ENCODE measurements at regions of chr21 and their contacts with region 1.

Region 1: DNA sequence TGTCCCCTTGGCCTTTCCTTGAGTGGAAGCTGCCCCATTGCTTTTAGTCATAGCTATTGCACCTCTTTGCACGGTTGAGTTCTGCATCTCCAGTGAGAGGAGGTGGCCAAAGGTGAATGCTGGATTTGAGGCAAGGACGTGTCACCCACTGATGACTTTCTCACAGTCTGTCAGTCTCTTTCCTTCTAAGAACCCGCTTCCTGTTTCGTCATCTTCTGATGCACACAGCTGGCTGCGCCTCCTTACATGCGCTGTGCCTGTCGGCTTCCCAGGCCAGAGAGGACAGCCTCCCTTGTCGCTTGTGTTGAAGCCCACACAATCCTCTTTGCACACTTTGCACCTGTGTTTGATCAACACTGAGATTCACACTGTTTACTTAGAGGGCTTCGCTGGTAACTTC is 41.8 kb upstream of the PWP2 start:
- DNase-seq: no peak
- ATAC-seq: no peak
- H3K4me3 ChIP-seq: no peak overlapping the region
- H3K27ac ChIP-seq: no peak overlapping the region
- H3K4me1 ChIP-seq: peaks cover 17% of the 10 kb centered on the region
- H3K27me3 ChIP-seq: no peaks in the 10 kb centered on the region
- CTCF ChIP-seq: no peak
- EP300 ChIP-seq: no peak
- POLR2A ChIP-seq: no peak
- RAD21 ChIP-seq: no peak

Region 2: DNA sequence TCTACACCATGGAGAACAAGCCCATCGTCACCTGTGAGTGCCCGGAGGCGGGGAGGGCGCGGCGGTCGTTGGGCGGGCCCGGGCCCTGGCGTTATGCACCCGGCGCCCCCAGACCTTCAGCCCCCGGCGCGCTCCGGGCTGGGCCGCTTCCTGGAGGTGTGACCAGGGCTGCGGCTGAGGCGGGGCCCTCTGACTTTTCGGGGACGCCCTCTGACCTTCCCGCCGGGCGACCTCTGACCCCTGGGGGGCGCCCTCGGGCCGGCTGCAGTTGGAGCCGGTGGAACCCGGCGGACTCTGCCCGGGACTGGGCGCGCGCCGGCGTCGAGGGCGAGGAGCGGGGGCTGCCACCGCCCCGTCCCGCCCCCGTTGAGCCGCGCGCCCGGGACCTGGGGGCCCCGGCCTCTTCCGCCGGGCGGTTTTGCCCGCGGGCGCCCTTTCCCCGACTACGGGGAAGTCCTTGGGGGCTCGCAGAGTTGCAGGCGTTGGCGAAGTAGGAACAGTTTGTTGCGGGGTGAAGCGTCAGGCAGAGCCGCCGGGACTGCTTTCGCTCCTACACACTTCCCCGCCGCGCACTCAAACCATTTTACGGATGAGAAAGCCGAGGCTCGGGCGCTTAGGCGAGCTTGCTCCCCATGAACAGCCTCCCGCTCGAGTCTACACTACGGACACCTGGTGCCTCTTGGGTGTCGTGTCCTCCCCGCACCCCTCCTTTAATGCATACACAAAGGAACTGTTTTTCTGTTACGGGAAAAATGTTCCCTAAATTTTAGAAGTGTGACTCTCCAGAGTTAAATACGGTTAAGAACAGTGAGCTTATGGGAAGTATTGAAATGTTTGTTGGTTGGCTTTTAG is 52.7 kb before region 1 on chr21:
- CTCF ChIA-PET with region 1: no interaction called
- POLR2A ChIA-PET with region 1: no interaction called
- in situ Hi-C with region 1: no loop called
- intact Hi-C with region 1: loop called (anchors 1 kb)
- DNase-seq: peak; percentile 65
- ATAC-seq: peak; percentile 72
- H3K4me3 ChIP-seq: peak overlapping the region; percentile 80 to 85 (median 83)
- H3K27ac ChIP-seq: peak overlapping the region; percentile 92
- H3K4me1 ChIP-seq: peaks cover 50% of the 10 kb centered on the region
- H3K27me3 ChIP-seq: no peaks in the 10 kb centered on the region; a peak in 1 of 5 replicates
- CTCF ChIP-seq: peak; percentile 78
- EP300 ChIP-seq: no peak
- POLR2A ChIP-seq: no peak
- RAD21 ChIP-seq: peak; percentile 79

Region 3: GRCh38 chr21:44024887-44025362 is 40.5 kb before region 1 on chr21:
- CTCF ChIA-PET with region 1: no interaction called
- POLR2A ChIA-PET with region 1: no interaction called
- in situ Hi-C with region 1: loop called (anchors 5 kb)
- intact Hi-C with region 1: no loop called
- DNase-seq: no peak
- ATAC-seq: peak; percentile 42; the same call in 2 of the 3 replicates
- H3K4me3 ChIP-seq: no peak overlapping the region
- H3K27ac ChIP-seq: no peak overlapping the region
- H3K4me1 ChIP-seq: peaks cover 50% of the 10 kb centered on the region
- H3K27me3 ChIP-seq: no peaks in the 10 kb centered on the region
- CTCF ChIP-seq: no peak
- EP300 ChIP-seq: no peak
- POLR2A ChIP-seq: no peak
- RAD21 ChIP-seq: no peak

Region 4: DNA sequence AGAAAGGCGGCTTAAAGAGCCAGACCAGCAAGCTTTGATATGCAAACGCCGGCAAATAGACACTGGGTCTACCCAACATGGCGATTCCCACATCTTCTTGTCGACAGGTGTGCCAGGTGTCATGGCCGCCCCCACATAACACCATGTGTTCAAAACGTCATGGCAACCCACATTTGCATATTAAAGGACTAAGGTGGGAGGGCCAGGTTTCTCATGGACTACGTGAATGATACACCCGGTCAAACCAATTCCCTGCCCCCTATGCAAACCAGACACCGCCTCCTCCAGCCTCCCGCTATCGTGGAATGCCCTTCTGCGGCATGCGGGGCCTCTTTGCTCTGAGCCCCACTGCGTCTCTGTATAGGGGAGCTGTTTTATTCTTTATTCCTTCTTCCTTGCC is 134.0 kb after region 1 on chr21:
- CTCF ChIA-PET with region 1: no interaction called
- POLR2A ChIA-PET with region 1: no interaction called
- in situ Hi-C with region 1: no loop called
- intact Hi-C with region 1: no loop called
- DNase-seq: no peak
- ATAC-seq: no peak
- H3K4me3 ChIP-seq: no peak overlapping the region
- H3K27ac ChIP-seq: no peak overlapping the region
- H3K4me1 ChIP-seq: no peaks in the 10 kb centered on the region
- H3K27me3 ChIP-seq: peaks cover 0 to 4% of the 10 kb centered on the region in 2 experiments; a peak in 1 of 5 replicates
- CTCF ChIP-seq: no peak
- EP300 ChIP-seq: no peak
- POLR2A ChIP-seq: no peak
- RAD21 ChIP-seq: no peak